ENCODE measurements at regions of chr7 and their contacts with region 1.

Region 1: GRCh38 chr7:129066290-129067131 is 11.6 kb upstream of the TNPO3 start:
- DNase-seq: no peak
- ATAC-seq: no peak
- H3K4me3 ChIP-seq: no peak overlapping the region
- H3K27ac ChIP-seq: no peak overlapping the region
- H3K4me1 ChIP-seq: peaks cover 0 to 3% of the 10 kb centered on the region in 2 experiments; a peak in 1 of 4 replicates
- H3K27me3 ChIP-seq: no peaks in the 10 kb centered on the region
- CTCF ChIP-seq: no peak
- POLR2A ChIP-seq: no peak
- RAD21 ChIP-seq: no peak

Region 2: DNA sequence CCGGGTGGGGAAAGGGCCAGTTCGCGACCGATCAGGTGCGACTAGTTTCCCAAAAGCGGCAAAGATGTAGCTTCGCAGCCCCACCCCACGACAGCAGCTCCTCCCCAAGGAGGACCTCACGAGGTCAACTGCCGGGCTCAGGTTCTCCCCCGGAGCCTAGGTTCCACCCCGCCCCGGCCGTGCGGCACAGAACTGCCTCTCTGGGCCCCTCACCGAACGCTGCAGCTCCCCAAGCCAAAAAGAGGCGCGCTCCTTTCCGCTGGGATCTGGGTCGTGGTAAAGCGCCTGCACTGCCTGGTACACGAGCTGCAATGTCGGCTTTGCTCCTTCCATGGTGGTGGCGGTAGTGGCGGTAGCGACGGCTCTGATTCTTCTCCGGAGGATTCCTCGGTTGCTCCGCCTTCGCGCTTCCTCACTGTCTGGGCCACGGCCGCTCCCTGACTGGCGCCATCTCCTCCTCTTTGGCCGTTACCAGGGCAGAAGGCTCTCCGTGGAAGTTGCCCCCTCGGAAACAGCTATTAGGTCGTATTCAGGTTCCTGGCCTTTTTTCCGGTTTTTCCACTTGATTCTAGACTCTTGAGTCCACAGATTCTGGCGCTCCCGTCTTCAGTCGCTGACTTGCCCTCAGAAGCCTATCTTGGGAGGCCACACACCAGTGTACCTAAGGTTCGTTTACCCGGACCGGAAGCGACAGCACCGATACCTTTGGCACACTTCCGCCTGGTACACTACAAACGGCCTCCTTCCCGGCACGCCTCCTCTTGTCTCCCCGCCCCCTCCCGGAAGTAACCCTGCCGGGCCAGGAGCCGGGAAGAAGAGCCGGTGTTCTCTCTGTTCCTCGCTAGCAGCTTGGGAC is 11.8 kb before region 1 on chr7 and contains the start of gene TNPO3:
- CTCF ChIA-PET with region 1: no interaction called
- POLR2A ChIA-PET with region 1: interaction called, 14 read pairs
- RAD21 ChIA-PET with region 1: no interaction called
- intact Hi-C with region 1: no loop called
- DNase-seq: peak; percentile 90
- ATAC-seq: peak; percentile 87
- H3K4me3 ChIP-seq: peak within 1 kb of the TSS; percentile 95 to 98
- H3K27ac ChIP-seq: peak within 1 kb of the TSS; percentile 91
- H3K4me1 ChIP-seq: peaks cover 3 to 14% of the 10 kb centered on the region in 2 experiments; a peak in 3 of 4 replicates
- H3K27me3 ChIP-seq: no peaks in the 10 kb centered on the region
- CTCF ChIP-seq: no peak
- POLR2A ChIP-seq: peak; percentile 75
- RAD21 ChIP-seq: no peak
- total RNA-seq, gene TNPO3: 58.5 TPM